ENCODE measurements at regions of chr3 and their contacts with region 1.

Region 1: GRCh38 chr3:114418724-114419543 is 125.1 kb downstream of the TIGIT start:
- DNase-seq: peak; percentile 83
- H3K4me3 Mint-ChIP-seq: peak overlapping the region; percentile 50
- H3K27ac Mint-ChIP-seq: peak overlapping the region; percentile 19
- H3K4me1 Mint-ChIP-seq: peaks cover 10% of the 10 kb centered on the region
- H3K27me3 Mint-ChIP-seq: no peaks in the 10 kb centered on the region
- CTCF ChIP-seq: peak; percentile 75

Region 2: GRCh38 chr3:114152519-114153151 is 266.3 kb before region 1 on chr3:
- CTCF ChIA-PET with region 1: interaction called, 3 read pairs
- POLR2A ChIA-PET with region 1: interaction called, 3 read pairs
- intact Hi-C with region 1: loop called (anchors 5 kb)
- DNase-seq: peak; percentile 75
- H3K4me3 Mint-ChIP-seq: peak overlapping the region; percentile 66
- H3K27ac Mint-ChIP-seq: no peak overlapping the region
- H3K4me1 Mint-ChIP-seq: peaks cover 7% of the 10 kb centered on the region
- H3K27me3 Mint-ChIP-seq: peaks cover 24% of the 10 kb centered on the region
- CTCF ChIP-seq: peak; percentile 84

Region 3: DNA sequence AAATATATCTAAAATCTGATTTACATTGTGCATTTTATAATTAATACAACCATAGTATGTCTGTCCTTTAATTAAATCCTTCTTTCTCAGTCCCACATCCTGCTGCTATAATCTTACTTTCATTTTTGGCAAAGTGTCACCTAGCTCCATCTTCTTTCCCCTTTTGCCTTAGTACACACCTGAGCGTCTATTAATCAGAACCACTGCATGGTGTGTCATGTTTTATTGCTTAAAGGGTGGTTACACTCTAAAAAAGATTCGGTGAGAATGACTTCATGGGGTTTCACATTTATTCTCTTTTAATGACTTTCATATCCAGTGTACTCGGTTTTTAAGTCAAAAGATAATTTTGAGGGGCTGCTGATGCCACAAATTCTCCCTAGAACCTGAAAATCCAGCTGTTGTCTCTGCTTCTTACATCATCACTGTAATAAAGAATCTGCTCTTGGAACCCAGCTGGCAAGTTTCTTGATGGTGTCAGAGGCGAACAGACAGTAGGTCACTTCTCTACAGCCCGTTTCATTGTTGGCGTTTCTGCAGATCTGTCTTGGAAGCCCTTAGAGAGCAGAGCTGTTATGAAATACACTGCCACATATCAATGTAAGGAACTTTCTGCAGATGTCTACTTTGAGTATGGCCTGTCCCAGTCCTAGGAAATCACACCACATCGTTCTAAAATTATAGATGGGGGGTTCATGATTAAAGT is 25.4 kb before region 1 on chr3:
- CTCF ChIA-PET with region 1: interaction called, 10 read pairs
- POLR2A ChIA-PET with region 1: interaction called, 3 read pairs
- intact Hi-C with region 1: no loop called
- DNase-seq: no peak
- H3K4me3 Mint-ChIP-seq: no peak overlapping the region
- H3K27ac Mint-ChIP-seq: no peak overlapping the region
- H3K4me1 Mint-ChIP-seq: peaks cover 6% of the 10 kb centered on the region
- H3K27me3 Mint-ChIP-seq: no peaks in the 10 kb centered on the region
- CTCF ChIP-seq: no peak

Region 4: GRCh38 chr3:114405202-114405990 is 13.5 kb before region 1 on chr3:
- CTCF ChIA-PET with region 1: interaction called, 12 read pairs
- POLR2A ChIA-PET with region 1: interaction called, 3 read pairs
- intact Hi-C with region 1: no loop called
- DNase-seq: no peak
- H3K4me3 Mint-ChIP-seq: no peak overlapping the region
- H3K27ac Mint-ChIP-seq: no peak overlapping the region
- H3K4me1 Mint-ChIP-seq: peaks cover 5% of the 10 kb centered on the region
- H3K27me3 Mint-ChIP-seq: no peaks in the 10 kb centered on the region
- CTCF ChIP-seq: no peak

Region 5: GRCh38 chr3:114442246-114442645 is 23.3 kb after region 1 on chr3:
- CTCF ChIA-PET with region 1: interaction called, 33 read pairs
- POLR2A ChIA-PET with region 1: interaction called, 3 read pairs
- intact Hi-C with region 1: no loop called
- DNase-seq: peak; percentile 20
- H3K4me3 Mint-ChIP-seq: no peak overlapping the region
- H3K27ac Mint-ChIP-seq: no peak overlapping the region
- H3K4me1 Mint-ChIP-seq: peaks cover 25% of the 10 kb centered on the region
- H3K27me3 Mint-ChIP-seq: no peaks in the 10 kb centered on the region
- CTCF ChIP-seq: no peak

Region 6: GRCh38 chr3:114582929-114583328 is 164.0 kb after region 1 on chr3:
- CTCF ChIA-PET with region 1: no interaction called
- POLR2A ChIA-PET with region 1: no interaction called
- intact Hi-C with region 1: no loop called
- DNase-seq: no peak
- H3K4me3 Mint-ChIP-seq: no peak overlapping the region
- H3K27ac Mint-ChIP-seq: no peak overlapping the region
- H3K4me1 Mint-ChIP-seq: no peaks in the 10 kb centered on the region
- H3K27me3 Mint-ChIP-seq: no peaks in the 10 kb centered on the region
- CTCF ChIP-seq: no peak